ENCODE measurements at regions of chr17 and their contacts with region 1.

Region 1: DNA sequence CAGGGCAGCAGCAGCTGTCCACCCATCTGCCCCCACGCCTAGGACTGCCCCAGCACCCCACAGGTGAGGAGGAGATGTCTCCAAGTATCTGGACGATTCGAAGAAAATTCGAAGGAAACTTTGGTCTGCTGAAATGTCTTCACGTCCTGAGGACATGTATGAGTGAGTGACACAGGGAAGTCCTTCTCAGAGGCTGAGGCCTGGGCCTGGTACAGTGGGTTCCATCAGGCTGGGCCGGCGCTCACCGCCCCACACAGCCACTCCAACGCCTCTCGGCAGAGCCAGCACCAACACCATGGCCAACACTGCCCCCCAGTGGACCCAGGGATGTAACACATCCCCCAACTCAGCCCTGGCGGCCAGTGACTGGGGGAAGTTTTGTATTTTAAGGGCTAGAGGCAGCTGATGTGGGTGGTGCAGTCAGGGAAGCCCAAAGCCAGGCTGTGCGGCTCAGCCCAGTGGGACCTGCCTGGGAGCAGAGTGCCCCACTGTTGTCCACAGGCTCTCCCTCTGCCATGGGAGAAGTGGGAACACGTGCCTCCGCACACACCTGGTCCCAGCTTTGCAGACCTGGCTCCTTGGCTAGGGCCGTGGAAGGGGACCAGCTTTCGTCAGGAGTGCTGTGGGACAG is 55.8 kb upstream of the FASN start:
- DNase-seq: peak; percentile 59 to 82
- ATAC-seq: peak; percentile 92

Region 2: DNA sequence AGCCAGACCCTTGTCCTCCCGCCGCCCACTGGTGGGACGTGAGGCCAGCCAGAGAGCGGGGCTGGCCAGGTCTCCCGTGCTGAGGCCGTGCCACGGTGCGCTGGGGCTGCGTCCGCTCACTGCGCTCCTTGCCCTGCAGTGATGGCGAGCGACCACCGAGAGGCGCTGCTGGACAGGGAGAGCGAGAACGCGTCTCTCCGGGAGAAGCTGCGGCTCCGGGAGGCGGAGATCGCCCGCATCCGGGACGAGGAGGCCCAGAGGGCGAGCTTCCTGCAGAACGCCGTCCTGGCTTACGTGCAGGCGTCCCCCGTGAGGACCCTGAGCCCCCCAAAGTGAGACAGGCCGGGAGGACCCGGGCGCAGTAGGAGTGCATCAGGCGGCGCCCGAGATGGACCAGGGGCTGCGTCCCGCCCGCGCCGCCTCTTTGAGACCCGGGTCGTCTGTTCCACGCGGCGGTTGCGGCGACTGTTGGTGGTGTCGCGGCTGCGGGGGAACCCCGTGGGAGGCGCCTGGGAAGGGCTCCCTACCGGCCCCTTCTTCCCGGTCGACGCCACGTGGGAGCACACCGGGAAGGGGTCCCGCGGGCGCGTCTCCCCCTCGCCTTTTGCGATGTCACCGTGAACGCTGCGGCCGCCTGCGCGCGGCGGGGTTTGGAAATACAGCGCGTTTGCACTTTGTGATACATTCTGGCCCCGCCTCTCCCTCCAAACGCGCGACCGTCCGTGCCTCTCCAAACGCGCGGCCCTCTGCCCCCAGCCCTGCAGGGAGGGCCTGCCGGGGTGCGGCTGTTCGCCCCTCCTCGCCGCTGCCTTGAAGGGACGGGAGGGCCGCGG is 123.2 kb before region 1 on chr17:
- intact Hi-C with region 1: loop called (anchors 5 kb)
- DNase-seq: peak; percentile 83 to 84
- ATAC-seq: peak; percentile 82

Measured in left colon (tissue), 2 donors.